CD8-positive, alpha-beta T cell (primary cell): ENCODE measurements at regions of chr3 and their contacts with region 1.

Region 1: DNA sequence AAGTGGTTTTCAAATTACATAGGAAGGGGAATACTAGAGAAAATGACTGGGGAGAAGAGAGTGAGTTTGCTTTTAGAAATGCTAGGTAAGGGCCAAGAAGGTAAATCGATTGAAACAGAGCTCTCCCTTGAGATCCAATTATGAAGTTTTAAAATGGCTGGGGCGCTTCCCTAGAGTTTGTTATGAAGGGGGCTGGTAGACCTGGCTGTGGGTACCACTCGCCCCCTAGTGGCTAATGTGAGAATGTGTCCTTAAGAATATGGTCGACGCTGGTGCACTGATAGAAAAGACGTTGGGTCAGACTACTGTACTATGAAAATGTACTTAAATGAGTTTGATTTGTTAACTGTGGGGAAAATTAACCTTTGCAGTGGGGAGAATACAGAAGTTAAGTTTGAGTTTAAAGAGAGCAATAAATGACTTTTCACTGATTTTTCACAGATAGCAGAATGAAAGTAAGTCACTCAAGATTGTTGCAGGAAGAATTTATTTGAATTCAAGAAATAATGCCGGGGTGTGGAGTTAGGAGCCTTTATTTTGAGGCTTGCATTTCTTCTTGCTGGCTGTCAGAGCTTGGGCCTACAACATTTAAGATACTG is 9.2 kb downstream of the TMPRSS7 start:
- DNase-seq: peak; percentile 1 to 82 (median 47)
- ATAC-seq: peak; percentile 99
- H3K4me3 ChIP-seq: no peak overlapping the region
- H3K4me3 Mint-ChIP-seq: no peak overlapping the region
- H3K27ac ChIP-seq: no peak overlapping the region
- H3K27ac Mint-ChIP-seq: no peak overlapping the region
- H3K4me1 ChIP-seq: no peaks in the 10 kb centered on the region
- H3K4me1 Mint-ChIP-seq: no peaks in the 10 kb centered on the region
- H3K27me3 ChIP-seq: no peaks in the 10 kb centered on the region
- H3K27me3 Mint-ChIP-seq: peaks cover 2% of the 10 kb centered on the region
- CTCF ChIP-seq: peak; percentile 88

Region 2: DNA sequence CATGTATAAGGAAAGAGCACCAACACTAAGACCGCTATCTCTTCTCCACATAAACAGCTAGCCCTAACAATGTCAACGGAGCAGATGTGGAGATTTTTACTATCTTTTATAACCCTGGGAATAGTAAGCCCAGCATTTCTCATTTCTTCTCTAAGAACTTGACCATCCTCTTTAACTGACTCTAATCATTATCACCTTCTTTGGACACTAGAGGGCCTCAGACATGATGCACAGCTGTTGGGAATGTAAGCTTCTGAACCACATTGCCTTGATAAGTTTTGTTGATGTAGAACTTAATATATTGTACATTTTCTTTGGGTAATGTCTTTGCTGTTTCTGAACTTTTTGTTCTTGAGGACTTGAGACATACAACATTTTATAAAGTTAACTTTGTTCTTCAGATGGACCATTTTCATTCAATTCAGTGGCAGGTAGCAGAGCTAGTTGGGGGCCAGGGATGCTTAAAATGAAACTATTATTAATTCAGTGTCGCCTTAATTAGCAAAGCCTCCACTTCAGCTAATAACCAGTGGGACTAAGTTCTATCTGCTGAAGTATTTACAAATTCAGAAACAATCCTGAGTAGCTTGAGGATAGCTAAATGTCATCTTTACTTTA is 54.5 kb before region 1 on chr3:
- CTCF ChIA-PET with region 1: interaction called, 10 read pairs
- POLR2A ChIA-PET with region 1: interaction called, 3 read pairs
- intact Hi-C with region 1: loop called in 1 of 2 experiments (anchors 2 kb)
- DNase-seq: peak in 2 of 9 experiments; percentile 53 to 64
- ATAC-seq: peak; percentile 72
- H3K4me3 ChIP-seq: no peak overlapping the region
- H3K4me3 Mint-ChIP-seq: peak overlapping the region; percentile 38
- H3K27ac ChIP-seq: no peak overlapping the region
- H3K27ac Mint-ChIP-seq: no peak overlapping the region
- H3K4me1 ChIP-seq: peaks cover 3% of the 10 kb centered on the region
- H3K4me1 Mint-ChIP-seq: peaks cover 39% of the 10 kb centered on the region
- H3K27me3 ChIP-seq: no peaks in the 10 kb centered on the region
- H3K27me3 Mint-ChIP-seq: no peaks in the 10 kb centered on the region
- CTCF ChIP-seq: peak; percentile 61

Region 3: GRCh38 chr3:112032098-112032731 is 11.5 kb before region 1 on chr3:
- CTCF ChIA-PET with region 1: interaction called, 15 read pairs
- POLR2A ChIA-PET with region 1: interaction called, 4 read pairs
- intact Hi-C with region 1: no loop called
- DNase-seq: no peak
- ATAC-seq: no peak
- H3K4me3 ChIP-seq: no peak overlapping the region
- H3K4me3 Mint-ChIP-seq: no peak overlapping the region
- H3K27ac ChIP-seq: no peak overlapping the region
- H3K27ac Mint-ChIP-seq: no peak overlapping the region
- H3K4me1 ChIP-seq: no peaks in the 10 kb centered on the region
- H3K4me1 Mint-ChIP-seq: no peaks in the 10 kb centered on the region
- H3K27me3 ChIP-seq: no peaks in the 10 kb centered on the region
- H3K27me3 Mint-ChIP-seq: no peaks in the 10 kb centered on the region
- CTCF ChIP-seq: no peak

Region 4: GRCh38 chr3:112086076-112086854 is 42.6 kb after region 1 on chr3 and contains the start of gene C3orf52:
- CTCF ChIA-PET with region 1: no interaction called
- POLR2A ChIA-PET with region 1: no interaction called
- intact Hi-C with region 1: loop called in 1 of 2 experiments (anchors 5 kb)
- DNase-seq: peak; percentile 6 to 70 (median 54)
- ATAC-seq: peak; percentile 84
- H3K4me3 ChIP-seq: peak within 1 kb of the TSS; percentile 65 to 72
- H3K4me3 Mint-ChIP-seq: peak within 1 kb of the TSS; percentile 85
- H3K27ac ChIP-seq: no peak within 1 kb of the TSS
- H3K27ac Mint-ChIP-seq: peak within 1 kb of the TSS; percentile 52
- H3K4me1 ChIP-seq: peaks cover 9% of the 10 kb centered on the region
- H3K4me1 Mint-ChIP-seq: peaks cover 30% of the 10 kb centered on the region
- H3K27me3 ChIP-seq: no peaks in the 10 kb centered on the region
- H3K27me3 Mint-ChIP-seq: peaks cover 13% of the 10 kb centered on the region
- CTCF ChIP-seq: no peak
- total RNA-seq, gene C3orf52: 0.19 to 0.78 TPM